ENCODE measurements at regions of chr22 and their contacts with region 1.

Region 1: DNA sequence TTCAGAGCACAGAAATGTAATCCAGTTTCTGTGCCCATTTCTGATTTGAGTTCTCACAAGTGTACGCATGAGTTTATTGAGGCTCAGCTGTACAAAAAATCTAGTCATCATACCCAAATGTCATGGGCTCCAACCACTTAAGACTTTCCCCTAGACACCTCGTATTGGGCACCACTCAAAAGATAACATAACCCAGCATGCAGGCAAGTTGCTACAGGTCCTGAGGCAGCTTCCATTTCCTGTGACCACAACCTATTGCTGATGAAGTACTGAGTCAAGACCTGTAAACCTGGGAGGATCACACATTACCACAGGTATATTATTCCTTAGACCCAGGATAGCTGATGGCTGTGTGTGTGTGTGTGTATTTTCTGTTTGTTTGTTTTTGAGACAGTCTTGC is 95.2 kb downstream of the MRTFA start:
- DNase-seq: no peak
- ATAC-seq: no peak
- H3K4me3 ChIP-seq: no peak overlapping the region
- H3K4me3 Mint-ChIP-seq: no peak overlapping the region
- H3K27ac ChIP-seq: no peak overlapping the region
- H3K27ac Mint-ChIP-seq: no peak overlapping the region
- H3K4me1 ChIP-seq: no peaks in the 10 kb centered on the region
- H3K4me1 Mint-ChIP-seq: peaks cover 21% of the 10 kb centered on the region
- H3K27me3 ChIP-seq: no peaks in the 10 kb centered on the region
- H3K27me3 Mint-ChIP-seq: no peaks in the 10 kb centered on the region
- CTCF ChIP-seq: no peak

Region 2: DNA sequence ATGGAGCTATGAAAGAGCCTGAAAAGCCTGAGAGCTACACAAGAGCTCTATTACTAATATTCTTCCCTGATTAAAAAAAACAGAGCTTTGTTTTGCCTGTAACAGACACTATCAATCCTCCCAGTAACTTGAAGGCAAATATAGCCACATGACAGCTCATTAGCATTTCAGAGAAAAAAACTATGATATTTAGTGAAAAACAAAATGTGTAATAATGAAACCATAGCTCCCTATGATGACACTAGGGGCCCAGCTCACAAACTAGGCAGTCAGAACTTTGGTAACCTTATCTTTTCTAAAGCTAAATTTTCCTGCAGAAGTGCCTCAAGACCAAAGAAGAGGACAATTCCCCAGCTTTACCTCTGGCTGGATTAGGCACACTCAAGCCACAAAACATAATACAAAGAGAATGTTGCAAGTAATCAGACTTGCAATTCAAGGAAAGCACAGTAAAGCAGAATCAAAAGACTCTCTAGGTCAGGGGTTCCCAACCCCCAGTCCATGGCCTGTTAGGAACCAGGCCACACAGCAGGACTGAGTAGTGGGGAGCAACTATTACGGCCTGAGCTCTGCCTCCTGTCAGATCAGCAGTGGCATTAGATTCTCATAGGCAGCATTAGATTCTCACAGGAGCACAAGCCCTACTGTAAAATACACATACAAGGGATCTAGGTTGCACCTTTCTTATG is 41.9 kb after region 1 on chr22:
- CTCF ChIA-PET with region 1: no interaction called
- POLR2A ChIA-PET with region 1: no interaction called
- intact Hi-C with region 1: loop called in 1 of 2 experiments (anchors 5 kb)
- DNase-seq: no peak
- ATAC-seq: no peak
- H3K4me3 ChIP-seq: no peak overlapping the region
- H3K4me3 Mint-ChIP-seq: no peak overlapping the region
- H3K27ac ChIP-seq: no peak overlapping the region
- H3K27ac Mint-ChIP-seq: peak overlapping the region; percentile 38
- H3K4me1 ChIP-seq: peaks cover 7% of the 10 kb centered on the region
- H3K4me1 Mint-ChIP-seq: peaks cover 25% of the 10 kb centered on the region
- H3K27me3 ChIP-seq: no peaks in the 10 kb centered on the region
- H3K27me3 Mint-ChIP-seq: no peaks in the 10 kb centered on the region
- CTCF ChIP-seq: no peak

Region 3: DNA sequence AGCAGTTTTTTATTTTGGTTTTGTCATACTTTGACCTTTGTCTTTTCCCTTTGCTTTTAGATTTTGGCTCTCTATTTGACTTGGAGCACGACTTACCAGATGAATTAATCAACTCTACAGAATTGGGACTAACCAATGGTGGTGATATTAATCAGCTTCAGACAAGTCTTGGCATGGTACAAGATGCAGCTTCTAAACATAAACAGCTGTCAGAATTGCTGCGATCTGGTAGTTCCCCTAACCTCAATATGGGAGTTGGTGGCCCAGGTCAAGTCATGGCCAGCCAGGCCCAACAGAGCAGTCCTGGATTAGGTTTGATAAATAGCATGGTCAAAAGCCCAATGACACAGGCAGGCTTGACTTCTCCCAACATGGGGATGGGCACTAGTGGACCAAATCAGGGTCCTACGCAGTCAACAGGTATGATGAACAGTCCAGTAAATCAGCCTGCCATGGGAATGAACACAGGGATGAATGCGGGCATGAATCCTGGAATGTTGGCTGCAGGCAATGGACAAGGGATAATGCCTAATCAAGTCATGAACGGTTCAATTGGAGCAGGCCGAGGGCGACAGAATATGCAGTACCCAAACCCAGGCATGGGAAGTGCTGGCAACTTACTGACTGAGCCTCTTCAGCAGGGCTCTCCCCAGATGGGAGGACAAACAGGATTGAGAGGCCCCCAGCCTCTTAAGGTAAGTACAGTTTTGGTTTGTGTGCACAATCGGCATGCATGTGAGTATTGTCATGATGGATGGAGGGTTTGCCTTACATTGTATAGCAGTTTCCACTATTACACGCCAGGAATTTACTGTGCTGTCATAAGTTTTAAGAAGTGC is 576.0 kb after region 1 on chr22:
- CTCF ChIA-PET with region 1: no interaction called
- POLR2A ChIA-PET with region 1: no interaction called
- intact Hi-C with region 1: no loop called
- DNase-seq: no peak
- ATAC-seq: no peak
- H3K4me3 ChIP-seq: no peak overlapping the region
- H3K4me3 Mint-ChIP-seq: no peak overlapping the region
- H3K27ac ChIP-seq: no peak overlapping the region
- H3K27ac Mint-ChIP-seq: peak overlapping the region; percentile 71
- H3K4me1 ChIP-seq: peaks cover 17% of the 10 kb centered on the region
- H3K4me1 Mint-ChIP-seq: peaks cover 69% of the 10 kb centered on the region
- H3K27me3 ChIP-seq: no peaks in the 10 kb centered on the region
- H3K27me3 Mint-ChIP-seq: no peaks in the 10 kb centered on the region
- CTCF ChIP-seq: no peak

Measured in CD8-positive, alpha-beta T cell (primary cell).